Activated naive CD4-positive, alpha-beta T cell treated with anti-CD3 and anti-CD28 coated beads for 36 hours (primary cell): ENCODE measurements at regions of chr5 and their contacts with region 1.

Region 1: GRCh38 chr5:110726249-110727024 is at the start of gene TMEM232:
- DNase-seq: peak; percentile 90
- H3K4me3 Mint-ChIP-seq: peak within 1 kb of the TSS; percentile 75
- H3K27ac Mint-ChIP-seq: no peak within 1 kb of the TSS
- H3K4me1 Mint-ChIP-seq: peaks cover 3% of the 10 kb centered on the region
- H3K27me3 Mint-ChIP-seq: no peaks in the 10 kb centered on the region
- total RNA-seq, gene TMEM232: 0.31 to 0.86 TPM

Region 2: DNA sequence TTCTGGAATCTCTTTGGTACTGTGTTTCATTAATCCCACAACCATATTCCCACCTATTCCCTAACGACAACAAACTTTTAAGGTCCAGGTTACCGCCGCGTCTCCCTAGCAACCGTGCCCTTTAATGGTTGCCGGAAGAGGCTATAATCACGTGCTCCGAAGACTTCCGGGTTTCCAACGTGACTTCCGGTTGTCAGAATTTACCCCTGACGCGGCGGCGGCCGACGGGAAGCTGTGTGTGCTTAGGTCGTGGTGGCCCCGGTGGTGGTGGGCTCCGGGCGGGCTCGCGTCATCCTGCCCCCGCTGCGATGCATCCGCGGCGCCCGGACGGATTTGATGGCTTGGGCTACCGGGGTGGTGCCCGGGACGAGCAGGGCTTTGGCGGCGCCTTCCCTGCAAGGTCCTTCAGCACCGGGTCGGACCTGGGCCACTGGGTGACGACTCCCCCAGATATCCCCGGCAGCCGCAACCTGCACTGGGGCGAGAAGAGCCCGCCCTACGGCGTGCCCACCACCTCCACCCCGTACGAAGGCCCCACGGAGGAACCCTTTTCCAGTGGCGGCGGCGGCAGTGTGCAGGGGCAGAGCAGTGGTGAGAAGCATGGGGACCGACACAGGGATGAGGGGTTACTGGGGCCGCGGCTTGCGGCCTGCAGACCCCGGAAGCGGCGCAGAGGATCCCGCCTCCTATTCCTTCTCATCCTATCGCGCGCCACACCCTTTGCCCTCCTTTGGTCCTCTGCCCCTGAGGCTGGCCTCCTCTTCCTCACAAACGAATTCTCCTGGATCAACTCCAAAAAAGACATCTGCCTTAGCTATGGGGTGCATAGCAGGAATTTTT is 12.6 kb after region 1 on chr5 and contains the start of gene SLC25A46:
- CTCF ChIA-PET with region 1: interaction called, 10 read pairs
- intact Hi-C with region 1: loop called (anchors 1 kb)
- DNase-seq: peak; percentile 89
- H3K4me3 Mint-ChIP-seq: peak within 1 kb of the TSS; percentile 96
- H3K27ac Mint-ChIP-seq: peak within 1 kb of the TSS; percentile 86
- H3K4me1 Mint-ChIP-seq: peaks cover 25% of the 10 kb centered on the region
- H3K27me3 Mint-ChIP-seq: peaks cover 8% of the 10 kb centered on the region
- total RNA-seq, gene SLC25A46: 26.1 to 27.2 TPM

Region 3: DNA sequence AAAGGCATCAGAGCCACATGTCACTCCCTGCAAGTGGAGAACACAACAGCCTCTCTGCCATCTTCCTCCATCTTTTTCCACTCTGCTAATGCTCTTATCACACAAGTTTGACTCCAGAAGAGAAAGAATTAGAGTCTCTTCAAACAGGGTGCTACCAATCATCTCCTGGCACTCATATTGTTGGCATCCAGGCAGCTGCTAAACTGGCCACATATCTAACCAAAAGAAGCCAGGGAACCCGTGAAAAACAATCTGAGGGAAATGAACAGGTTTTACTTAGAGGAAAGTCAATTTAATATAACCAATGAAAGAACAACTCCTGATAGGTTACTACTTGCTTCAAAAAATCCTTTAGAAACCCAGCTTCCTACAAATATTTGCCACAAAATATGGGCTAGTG is 129.5 kb after region 1 on chr5:
- CTCF ChIA-PET with region 1: no interaction called
- intact Hi-C with region 1: no loop called
- DNase-seq: no peak
- H3K4me3 Mint-ChIP-seq: no peak overlapping the region
- H3K27ac Mint-ChIP-seq: no peak overlapping the region
- H3K4me1 Mint-ChIP-seq: no peaks in the 10 kb centered on the region
- H3K27me3 Mint-ChIP-seq: peaks cover 10% of the 10 kb centered on the region

Region 4: GRCh38 chr5:111072949-111073682 is 346.7 kb after region 1 on chr5:
- CTCF ChIA-PET with region 1: no interaction called
- intact Hi-C with region 1: loop called (anchors 5 kb)
- DNase-seq: peak; percentile 71
- H3K4me3 Mint-ChIP-seq: peak overlapping the region; percentile 88
- H3K27ac Mint-ChIP-seq: no peak overlapping the region
- H3K4me1 Mint-ChIP-seq: peaks cover 30% of the 10 kb centered on the region
- H3K27me3 Mint-ChIP-seq: peaks cover 61% of the 10 kb centered on the region

Region 5: DNA sequence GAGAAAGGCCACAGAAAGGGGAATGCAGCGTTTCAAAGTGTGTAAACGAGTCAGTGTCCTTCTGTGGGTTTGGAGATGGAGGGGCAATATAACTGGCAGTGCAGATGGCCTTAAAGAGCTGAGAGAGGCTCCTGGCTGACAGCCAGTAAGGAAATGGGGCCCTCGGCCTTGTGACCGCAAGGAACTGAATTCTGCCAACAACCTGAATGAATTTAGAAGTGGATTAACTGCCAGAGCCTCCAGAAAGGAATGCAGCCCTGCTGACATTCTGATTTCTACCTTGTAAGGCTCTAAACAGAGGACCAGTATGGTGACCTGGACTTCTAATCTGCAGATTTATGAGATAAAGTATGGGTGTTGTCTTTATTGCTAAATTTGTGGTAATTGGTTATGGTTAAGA is 1048.1 kb after region 1 on chr5:
- CTCF ChIA-PET with region 1: no interaction called
- intact Hi-C with region 1: no loop called
- DNase-seq: no peak
- H3K4me3 Mint-ChIP-seq: no peak overlapping the region
- H3K27ac Mint-ChIP-seq: no peak overlapping the region
- H3K4me1 Mint-ChIP-seq: no peaks in the 10 kb centered on the region
- H3K27me3 Mint-ChIP-seq: peaks cover 3% of the 10 kb centered on the region